Ascending aorta (tissue), 2 donors: ENCODE measurements at regions of chr4 and their contacts with region 1.

Region 1: GRCh38 chr4:31474221-31474620 is 754.1 kb downstream of the PCDH7 start:
- DNase-seq: no peak
- H3K4me3 ChIP-seq: no peak overlapping the region
- H3K27ac ChIP-seq: no peak overlapping the region
- H3K4me1 ChIP-seq: no peaks in the 10 kb centered on the region
- H3K27me3 ChIP-seq: no peaks in the 10 kb centered on the region
- CTCF ChIP-seq: no peak

Region 2: DNA sequence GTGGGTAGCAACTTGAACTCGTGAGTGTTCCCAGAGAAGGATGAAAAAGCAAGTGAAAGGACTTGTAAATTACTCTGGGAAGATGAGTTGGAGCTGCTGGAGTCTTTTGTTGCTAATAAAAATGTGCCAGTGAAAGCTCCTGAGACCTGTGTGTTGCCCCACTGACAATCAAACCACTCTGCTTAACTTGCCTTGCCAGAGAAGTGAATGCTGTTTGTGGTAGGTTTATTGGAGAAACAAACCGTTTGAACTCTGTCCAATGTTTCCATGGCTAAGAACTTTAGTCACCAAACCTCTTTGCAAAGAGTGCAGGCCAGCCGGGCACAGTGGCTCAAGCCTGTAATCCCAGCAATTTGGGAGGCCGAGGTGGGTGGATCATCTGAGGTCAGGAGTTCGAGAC is 167.2 kb before region 1 on chr4:
- intact Hi-C with region 1: no loop called
- DNase-seq: no peak
- H3K4me3 ChIP-seq: no peak overlapping the region
- H3K27ac ChIP-seq: no peak overlapping the region
- H3K4me1 ChIP-seq: no peaks in the 10 kb centered on the region
- H3K27me3 ChIP-seq: no peaks in the 10 kb centered on the region
- CTCF ChIP-seq: no peak

Region 3: DNA sequence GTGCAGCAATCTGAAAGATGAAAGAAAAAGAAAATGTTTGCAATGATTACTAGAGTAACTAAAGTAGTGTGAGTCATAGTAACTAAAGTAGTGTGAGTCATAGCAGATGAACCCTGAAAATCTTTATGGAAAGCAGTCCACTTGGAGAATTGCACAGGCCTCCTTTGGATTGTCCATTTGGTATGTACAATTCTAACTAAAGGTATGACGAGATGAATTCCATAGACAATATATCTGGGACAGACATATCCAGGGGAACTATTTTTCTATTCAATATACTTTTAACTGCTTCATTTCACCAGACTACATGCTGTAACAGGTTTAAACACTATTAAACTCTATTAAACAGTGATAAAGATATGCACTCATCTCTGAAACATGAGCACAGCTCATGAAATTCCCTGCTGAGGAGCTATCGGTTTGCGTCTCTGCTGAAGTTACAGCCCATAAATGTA is 44.6 kb after region 1 on chr4:
- intact Hi-C with region 1: loop called (anchors 2 kb)
- DNase-seq: no peak
- H3K4me3 ChIP-seq: no peak overlapping the region
- H3K27ac ChIP-seq: no peak overlapping the region
- H3K4me1 ChIP-seq: no peaks in the 10 kb centered on the region
- H3K27me3 ChIP-seq: no peaks in the 10 kb centered on the region
- CTCF ChIP-seq: no peak